CD8-positive, alpha-beta memory T cell (primary cell): ENCODE measurements at regions of chr5 and their contacts with region 1.

Region 1: DNA sequence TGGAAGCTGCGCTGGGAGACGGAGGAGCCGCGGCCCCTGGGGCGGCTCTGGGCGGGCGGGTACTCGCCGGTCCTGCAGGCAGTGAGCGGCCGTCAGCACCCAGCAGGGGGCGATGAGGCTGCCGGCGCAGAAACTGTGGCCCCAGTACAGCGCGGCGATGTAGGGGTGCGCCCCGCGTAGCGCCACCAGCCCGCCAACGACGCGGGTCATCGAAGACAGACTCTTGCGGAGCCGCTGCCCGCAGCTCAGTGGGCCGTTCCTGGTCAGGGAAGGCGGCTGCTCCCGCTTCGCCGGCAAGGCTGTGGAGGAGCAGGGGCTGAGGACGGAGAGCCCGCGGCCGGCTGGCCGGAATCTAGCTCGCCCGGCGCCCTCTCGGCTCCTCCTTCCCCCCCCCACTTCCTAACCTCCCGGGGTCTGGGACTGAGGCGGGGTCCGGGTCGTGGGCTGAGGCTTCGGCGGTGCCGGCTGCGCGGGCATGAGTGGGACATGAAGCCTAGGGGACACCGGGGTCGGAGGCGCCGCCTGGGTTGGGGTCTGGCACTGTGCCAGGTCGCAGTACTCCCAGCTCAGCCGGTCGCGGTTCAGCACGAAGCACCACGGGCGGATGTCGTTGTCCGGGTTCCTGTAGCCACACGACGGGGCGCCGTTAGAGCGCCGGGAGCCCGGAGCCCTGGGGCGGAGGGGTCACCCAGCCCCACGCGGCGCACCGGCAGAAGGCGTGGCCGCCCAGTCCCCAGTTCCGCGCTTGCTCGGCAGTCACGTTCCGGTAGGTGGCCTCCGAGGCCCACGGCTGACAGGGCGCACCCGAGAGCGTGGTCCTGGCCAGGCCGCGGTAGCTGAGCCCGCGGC is 3.6 kb upstream of the PFN3 start:
- DNase-seq: peak; percentile 75 to 91 (median 82)
- H3K4me3 ChIP-seq: peak overlapping the region; percentile 69
- H3K4me3 Mint-ChIP-seq: peak overlapping the region; percentile 78 to 91 (median 84)
- H3K27ac ChIP-seq: peak overlapping the region; percentile 57
- H3K27ac Mint-ChIP-seq: peak overlapping the region in 7 of 8 donors; percentile 26 to 94 (median 83)
- H3K4me1 ChIP-seq: peaks cover 35% of the 10 kb centered on the region
- H3K4me1 Mint-ChIP-seq: peaks cover 26 to 42% (median 30%) of the 10 kb centered on the region in 3 donors
- H3K27me3 ChIP-seq: no peaks in the 10 kb centered on the region
- H3K27me3 Mint-ChIP-seq: peaks cover 0 to 11% of the 10 kb centered on the region in 2 donors

Region 2: GRCh38 chr5:177311723-177312648 is 92.0 kb before region 1 on chr5 and contains the start of gene MXD3:
- CTCF ChIA-PET with region 1: interaction called, 55 read pairs
- POLR2A ChIA-PET with region 1: no interaction called
- DNase-seq: peak; percentile 92 to 96 (median 94)
- H3K4me3 ChIP-seq: peak within 1 kb of the TSS; percentile 70
- H3K4me3 Mint-ChIP-seq: peak within 1 kb of the TSS; percentile 70 to 92 (median 78)
- H3K27ac ChIP-seq: peak within 1 kb of the TSS; percentile 51
- H3K27ac Mint-ChIP-seq: peak within 1 kb of the TSS; percentile 32 to 84 (median 57)
- H3K4me1 ChIP-seq: peaks cover 20% of the 10 kb centered on the region
- H3K4me1 Mint-ChIP-seq: peaks cover 29 to 43% (median 30%) of the 10 kb centered on the region in 3 donors
- H3K27me3 ChIP-seq: no peaks in the 10 kb centered on the region
- H3K27me3 Mint-ChIP-seq: peaks cover 0 to 2% of the 10 kb centered on the region in 2 donors
- total RNA-seq, gene MXD3: 10.2 to 13.4 TPM

Region 3: GRCh38 chr5:177357459-177358351 is 46.3 kb before region 1 on chr5 and contains the start of gene RGS14:
- CTCF ChIA-PET with region 1: interaction called, 37 read pairs
- POLR2A ChIA-PET with region 1: no interaction called
- DNase-seq: peak; percentile 42 to 91 (median 84)
- H3K4me3 ChIP-seq: peak within 1 kb of the TSS; percentile 85
- H3K4me3 Mint-ChIP-seq: peak within 1 kb of the TSS; percentile 84 to 95 (median 87)
- H3K27ac ChIP-seq: peak within 1 kb of the TSS; percentile 79
- H3K27ac Mint-ChIP-seq: peak within 1 kb of the TSS; percentile 75 to 100 (median 95)
- H3K4me1 ChIP-seq: peaks cover 67% of the 10 kb centered on the region
- H3K4me1 Mint-ChIP-seq: peaks cover 71 to 82% (median 79%) of the 10 kb centered on the region in 3 donors
- H3K27me3 ChIP-seq: no peaks in the 10 kb centered on the region
- H3K27me3 Mint-ChIP-seq: no peaks in the 10 kb centered on the region
- total RNA-seq, gene RGS14: 60.5 to 61.9 TPM

Region 4: DNA sequence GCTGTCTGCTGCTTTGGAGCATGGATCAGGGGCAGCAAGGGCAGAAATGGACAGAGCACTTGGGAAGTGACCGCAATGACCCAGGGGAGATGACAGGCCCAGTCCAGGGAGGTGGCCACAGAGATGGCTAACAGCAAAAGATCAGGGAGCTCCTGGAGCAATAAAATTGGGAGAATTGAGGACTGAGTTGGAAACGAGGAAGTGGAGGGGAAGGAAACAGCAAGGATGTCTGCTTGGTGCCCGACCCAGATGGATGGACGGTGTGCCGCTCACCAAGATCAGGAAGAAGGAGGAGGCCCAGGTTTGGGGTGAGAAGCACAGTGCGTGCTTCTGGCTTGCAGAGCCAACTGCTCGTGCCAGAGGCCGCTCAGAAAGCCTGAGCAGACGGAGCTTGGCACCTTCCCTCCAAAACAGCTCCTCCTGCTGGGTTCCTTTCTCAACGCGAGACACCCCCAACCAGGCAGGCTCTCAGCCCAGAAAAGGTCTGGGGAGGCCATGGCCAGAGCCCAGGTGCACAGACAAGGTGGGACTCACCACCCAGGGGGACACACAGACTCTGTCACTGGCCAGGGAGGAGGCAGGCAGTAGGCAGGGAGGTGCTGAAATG is 21.5 kb before region 1 on chr5:
- CTCF ChIA-PET with region 1: interaction called, 291 read pairs
- POLR2A ChIA-PET with region 1: no interaction called
- DNase-seq: peak in 1 of 5 donors; percentile 39
- H3K4me3 ChIP-seq: no peak overlapping the region
- H3K4me3 Mint-ChIP-seq: no peak overlapping the region
- H3K27ac ChIP-seq: no peak overlapping the region
- H3K27ac Mint-ChIP-seq: no peak overlapping the region
- H3K4me1 ChIP-seq: peaks cover 41% of the 10 kb centered on the region
- H3K4me1 Mint-ChIP-seq: peaks cover 14 to 30% (median 16%) of the 10 kb centered on the region in 3 donors
- H3K27me3 ChIP-seq: no peaks in the 10 kb centered on the region
- H3K27me3 Mint-ChIP-seq: peaks cover 0 to 2% of the 10 kb centered on the region in 2 donors

Region 5: GRCh38 chr5:177431317-177432142 is 27.5 kb after region 1 on chr5:
- CTCF ChIA-PET with region 1: interaction called, 307 read pairs
- POLR2A ChIA-PET with region 1: interaction called, 54 read pairs
- DNase-seq: peak; percentile 63 to 88 (median 78)
- H3K4me3 ChIP-seq: peak overlapping the region; percentile 88
- H3K4me3 Mint-ChIP-seq: peak overlapping the region; percentile 80 to 97 (median 94)
- H3K27ac ChIP-seq: peak overlapping the region; percentile 93
- H3K27ac Mint-ChIP-seq: peak overlapping the region; percentile 81 to 99 (median 95)
- H3K4me1 ChIP-seq: peaks cover 92% of the 10 kb centered on the region
- H3K4me1 Mint-ChIP-seq: peaks cover 58 to 88% (median 60%) of the 10 kb centered on the region in 3 donors
- H3K27me3 ChIP-seq: no peaks in the 10 kb centered on the region
- H3K27me3 Mint-ChIP-seq: peaks cover 0 to 4% of the 10 kb centered on the region in 2 donors

Region 6: DNA sequence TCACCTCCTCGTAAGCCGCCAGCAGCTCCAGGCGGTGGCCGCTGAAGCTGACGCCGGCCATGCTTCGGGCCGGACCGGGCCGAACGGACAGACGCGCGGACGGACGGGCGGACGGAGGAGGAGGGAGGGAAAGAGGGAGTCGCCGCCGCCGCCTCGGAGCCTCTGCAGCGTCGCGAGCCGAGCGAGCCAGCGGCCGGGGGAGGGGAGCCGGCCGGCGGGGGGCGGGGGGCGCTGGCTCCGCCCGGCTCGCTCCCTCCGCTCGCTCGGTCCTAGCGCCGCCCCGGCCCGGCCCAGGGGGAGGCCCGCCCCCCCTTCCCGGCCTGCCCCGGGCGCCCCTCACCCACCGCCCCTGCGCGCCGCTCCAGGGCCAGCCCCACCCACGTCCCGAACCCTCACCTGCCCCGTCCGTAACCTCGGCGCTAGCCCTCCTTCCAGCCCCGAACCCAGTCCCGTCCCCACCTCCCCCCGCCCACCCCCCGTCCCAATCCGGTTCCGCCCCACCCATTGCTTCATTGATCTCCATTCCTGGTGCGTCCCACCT is 69.5 kb after region 1 on chr5 and contains the start of gene DBN1:
- CTCF ChIA-PET with region 1: interaction called, 19 read pairs
- POLR2A ChIA-PET with region 1: interaction called, 4 read pairs
- DNase-seq: no peak
- H3K4me3 ChIP-seq: peak within 1 kb of the TSS; percentile 45
- H3K4me3 Mint-ChIP-seq: peak within 1 kb of the TSS; percentile 80 to 94 (median 84)
- H3K27ac ChIP-seq: peak within 1 kb of the TSS; percentile 47
- H3K27ac Mint-ChIP-seq: peak within 1 kb of the TSS; percentile 3 to 92 (median 76)
- H3K4me1 ChIP-seq: peaks cover 30% of the 10 kb centered on the region
- H3K4me1 Mint-ChIP-seq: peaks cover 34 to 56% (median 36%) of the 10 kb centered on the region in 3 donors
- H3K27me3 ChIP-seq: no peaks in the 10 kb centered on the region
- H3K27me3 Mint-ChIP-seq: peaks cover 0 to under 1% of the 10 kb centered on the region in 2 donors
- total RNA-seq, gene DBN1: 47.9 to 50.5 TPM